Activated CD4-positive, alpha-beta memory T cell treated with anti-CD3 and anti-CD28 coated beads for 36 hours (primary cell): ENCODE measurements at regions of chr18 and their contacts with region 1.

Region 1: GRCh38 chr18:46073474-46074331 is 1.6 kb upstream of the PSTPIP2 start:
- DNase-seq: peak; percentile 65
- H3K4me3 Mint-ChIP-seq: no peak overlapping the region
- H3K27ac Mint-ChIP-seq: no peak overlapping the region
- H3K4me1 Mint-ChIP-seq: peaks cover 37% of the 10 kb centered on the region
- H3K27me3 Mint-ChIP-seq: no peaks in the 10 kb centered on the region

Region 2: GRCh38 chr18:45690975-45691815 is 382.5 kb before region 1 on chr18:
- CTCF ChIA-PET with region 1: interaction called, 6 read pairs
- POLR2A ChIA-PET with region 1: no interaction called
- intact Hi-C with region 1: loop called (anchors 1 kb)
- DNase-seq: peak; percentile 84
- H3K4me3 Mint-ChIP-seq: no peak overlapping the region
- H3K27ac Mint-ChIP-seq: no peak overlapping the region
- H3K4me1 Mint-ChIP-seq: peaks cover 42% of the 10 kb centered on the region
- H3K27me3 Mint-ChIP-seq: peaks cover 6% of the 10 kb centered on the region

Region 3: GRCh38 chr18:45910405-45911023 is 163.2 kb before region 1 on chr18:
- CTCF ChIA-PET with region 1: interaction called, 34 read pairs
- POLR2A ChIA-PET with region 1: interaction called, 3 read pairs
- intact Hi-C with region 1: loop called (anchors 1 kb)
- DNase-seq: peak; percentile 72
- H3K4me3 Mint-ChIP-seq: no peak overlapping the region
- H3K27ac Mint-ChIP-seq: no peak overlapping the region
- H3K4me1 Mint-ChIP-seq: no peaks in the 10 kb centered on the region
- H3K27me3 Mint-ChIP-seq: no peaks in the 10 kb centered on the region

Region 4: GRCh38 chr18:45954070-45954934 is 119.4 kb before region 1 on chr18:
- CTCF ChIA-PET with region 1: interaction called, 15 read pairs
- POLR2A ChIA-PET with region 1: no interaction called
- intact Hi-C with region 1: no loop called
- DNase-seq: no peak
- H3K4me3 Mint-ChIP-seq: no peak overlapping the region
- H3K27ac Mint-ChIP-seq: no peak overlapping the region
- H3K4me1 Mint-ChIP-seq: peaks cover 38% of the 10 kb centered on the region
- H3K27me3 Mint-ChIP-seq: no peaks in the 10 kb centered on the region

Region 5: DNA sequence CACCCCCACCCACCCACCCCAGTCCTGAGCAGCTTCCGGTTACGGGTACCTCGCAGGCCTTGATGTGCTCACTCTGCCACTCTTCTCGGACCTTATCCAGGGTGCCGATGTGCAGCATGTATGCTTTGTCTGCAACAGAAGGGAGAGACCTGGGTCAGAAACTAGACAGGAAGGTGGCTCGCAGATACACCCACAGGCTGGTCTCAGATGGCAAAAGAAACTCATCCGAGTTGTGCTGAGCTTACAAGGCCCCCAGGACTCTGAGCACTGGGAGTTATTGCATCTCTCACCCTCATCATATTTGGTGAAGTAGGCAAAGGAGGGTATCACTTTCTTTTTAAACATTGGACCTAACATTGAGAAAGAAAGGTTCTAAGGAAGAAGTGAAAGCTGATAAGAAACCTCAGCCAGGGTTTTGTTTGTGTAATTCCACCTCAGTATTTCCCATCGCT is 76.0 kb before region 1 on chr18:
- CTCF ChIA-PET with region 1: interaction called, 14 read pairs
- POLR2A ChIA-PET with region 1: interaction called, 3 read pairs
- intact Hi-C with region 1: no loop called
- DNase-seq: peak; percentile 57
- H3K4me3 Mint-ChIP-seq: peak overlapping the region; percentile 59
- H3K27ac Mint-ChIP-seq: peak overlapping the region; percentile 72
- H3K4me1 Mint-ChIP-seq: peaks cover 44% of the 10 kb centered on the region
- H3K27me3 Mint-ChIP-seq: no peaks in the 10 kb centered on the region

Region 6: GRCh38 chr18:46042571-46043123 is 31.1 kb before region 1 on chr18:
- CTCF ChIA-PET with region 1: interaction called, 4 read pairs
- POLR2A ChIA-PET with region 1: no interaction called
- intact Hi-C with region 1: loop called (anchors 2 kb)
- DNase-seq: peak; percentile 56
- H3K4me3 Mint-ChIP-seq: no peak overlapping the region
- H3K27ac Mint-ChIP-seq: peak overlapping the region; percentile 52
- H3K4me1 Mint-ChIP-seq: peaks cover 43% of the 10 kb centered on the region
- H3K27me3 Mint-ChIP-seq: no peaks in the 10 kb centered on the region

Region 7: GRCh38 chr18:46097801-46098615 is 24.3 kb after region 1 on chr18 and contains the start of gene ATP5F1A:
- CTCF ChIA-PET with region 1: interaction called, 7 read pairs
- POLR2A ChIA-PET with region 1: no interaction called
- intact Hi-C with region 1: loop called (anchors 2 kb)
- DNase-seq: peak; percentile 94
- H3K4me3 Mint-ChIP-seq: peak within 1 kb of the TSS; percentile 98
- H3K27ac Mint-ChIP-seq: peak within 1 kb of the TSS; percentile 93
- H3K4me1 Mint-ChIP-seq: peaks cover 25% of the 10 kb centered on the region
- H3K27me3 Mint-ChIP-seq: no peaks in the 10 kb centered on the region
- total RNA-seq, gene ATP5F1A: 442 to 447 TPM

Region 8: DNA sequence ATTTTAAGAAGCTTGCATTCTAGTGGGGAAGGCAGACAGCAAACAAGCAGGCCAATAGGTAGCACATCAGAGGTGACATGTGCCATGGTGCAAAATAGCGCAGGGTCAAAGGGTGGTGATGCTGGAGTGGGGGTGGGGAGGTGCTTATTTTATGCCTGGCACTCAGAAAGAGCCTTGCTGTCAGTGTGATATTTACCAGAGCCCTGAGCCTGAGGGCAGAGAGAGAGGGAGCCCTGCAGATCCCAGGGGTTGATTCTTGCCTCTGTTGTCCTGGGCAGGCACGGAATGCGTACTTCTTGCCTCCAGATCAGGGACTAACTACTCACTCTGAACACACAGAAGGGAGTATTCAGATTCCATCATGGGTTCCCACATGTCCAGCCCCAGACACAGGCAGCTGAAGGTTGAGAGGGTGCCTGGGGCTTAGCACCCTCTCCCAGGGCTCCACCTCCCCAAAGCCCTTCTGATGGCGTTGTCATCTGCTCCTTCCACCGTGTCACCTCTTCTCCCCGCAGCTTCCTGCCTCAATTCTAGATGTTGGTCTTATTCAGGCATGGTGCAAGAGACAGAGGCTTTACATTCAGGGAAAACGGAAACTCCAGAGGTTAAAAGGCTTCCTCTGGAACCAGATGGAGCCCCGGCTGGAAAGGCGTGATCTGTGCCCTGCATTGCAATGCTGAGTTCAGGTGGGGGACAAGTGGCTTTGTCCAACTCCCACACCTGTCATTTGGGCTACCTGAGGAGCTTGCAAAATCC is 282.8 kb after region 1 on chr18:
- CTCF ChIA-PET with region 1: no interaction called
- POLR2A ChIA-PET with region 1: no interaction called
- intact Hi-C with region 1: no loop called
- DNase-seq: no peak
- H3K4me3 Mint-ChIP-seq: no peak overlapping the region
- H3K27ac Mint-ChIP-seq: no peak overlapping the region
- H3K4me1 Mint-ChIP-seq: no peaks in the 10 kb centered on the region
- H3K27me3 Mint-ChIP-seq: no peaks in the 10 kb centered on the region

Region 9: DNA sequence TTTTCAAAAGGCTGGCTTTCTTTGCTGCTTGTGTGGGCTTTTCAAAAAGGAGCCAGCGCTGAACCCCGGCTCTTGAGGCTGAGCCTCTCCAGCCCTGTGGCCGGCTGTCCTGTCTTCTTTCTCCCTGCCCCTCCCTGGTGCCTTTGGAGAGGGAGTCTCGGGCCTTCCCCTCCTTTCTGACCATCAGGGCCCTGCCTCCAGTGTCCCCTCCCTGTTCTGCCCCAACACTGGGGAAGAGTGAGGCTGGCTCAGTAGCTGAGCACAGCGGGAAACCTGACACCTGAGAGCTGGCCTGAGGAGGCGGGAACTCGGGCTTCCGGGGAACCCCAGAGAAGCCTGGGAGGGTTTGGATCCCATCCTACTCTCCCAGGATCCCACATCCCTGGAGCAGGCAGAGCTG is 351.2 kb after region 1 on chr18:
- CTCF ChIA-PET with region 1: no interaction called
- POLR2A ChIA-PET with region 1: no interaction called
- intact Hi-C with region 1: no loop called
- DNase-seq: no peak
- H3K4me3 Mint-ChIP-seq: no peak overlapping the region
- H3K27ac Mint-ChIP-seq: no peak overlapping the region
- H3K4me1 Mint-ChIP-seq: peaks cover 2% of the 10 kb centered on the region
- H3K27me3 Mint-ChIP-seq: no peaks in the 10 kb centered on the region

Region 10: DNA sequence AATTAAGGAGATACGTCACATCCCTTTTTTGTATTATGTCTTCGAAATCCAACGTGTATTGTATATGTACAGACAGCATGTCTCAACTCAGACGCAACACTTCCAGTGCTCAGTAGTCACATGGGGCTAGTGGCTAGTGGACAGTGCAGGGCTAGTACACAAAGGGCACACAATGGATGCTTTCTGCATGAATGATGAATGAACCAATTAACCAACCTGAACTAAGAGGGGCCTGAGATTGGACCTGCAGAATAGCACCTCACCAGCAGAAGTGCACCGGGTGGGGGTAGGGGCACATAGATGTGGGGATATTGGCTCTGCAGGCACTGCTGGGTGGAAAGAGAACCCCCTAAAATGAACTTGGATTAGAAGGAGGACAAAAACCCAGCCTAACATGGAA is 662.4 kb after region 1 on chr18:
- CTCF ChIA-PET with region 1: no interaction called
- POLR2A ChIA-PET with region 1: no interaction called
- intact Hi-C with region 1: no loop called
- DNase-seq: no peak
- H3K4me3 Mint-ChIP-seq: no peak overlapping the region
- H3K27ac Mint-ChIP-seq: no peak overlapping the region
- H3K4me1 Mint-ChIP-seq: no peaks in the 10 kb centered on the region
- H3K27me3 Mint-ChIP-seq: peaks cover 12% of the 10 kb centered on the region